HCT116 (cell line): ENCODE measurements at regions of chr1 and their contacts with region 1.

Region 1: GRCh38 chr1:202315576-202316168 is 26.1 kb downstream of the UBE2T start:
- DNase-seq: peak; percentile 59
- ATAC-seq: peak; percentile 97
- H3K4me3 ChIP-seq: no peak overlapping the region
- H3K27ac ChIP-seq: no peak overlapping the region
- H3K4me1 ChIP-seq: no peaks in the 10 kb centered on the region
- H3K27me3 ChIP-seq: peaks cover 15% of the 10 kb centered on the region; the same call in 1 of the 2 replicates
- CTCF ChIP-seq: peak; percentile 98
- POLR2A ChIP-seq: no peak
- RAD21 ChIP-seq: peak; percentile 99

Region 2: GRCh38 chr1:201019321-201019977 is 1296.2 kb before region 1 on chr1:
- CTCF ChIA-PET with region 1: no interaction called
- POLR2A ChIA-PET with region 1: no interaction called
- RAD21 ChIA-PET with region 1: no interaction called
- intact Hi-C with region 1: no loop called
- DNase-seq: peak; percentile 49
- ATAC-seq: no peak
- H3K4me3 ChIP-seq: no peak overlapping the region
- H3K27ac ChIP-seq: no peak overlapping the region
- H3K4me1 ChIP-seq: peaks cover 13 to 42% of the 10 kb centered on the region in 2 experiments; a peak in 3 of 4 replicates
- H3K27me3 ChIP-seq: no peaks in the 10 kb centered on the region
- CTCF ChIP-seq: no peak
- POLR2A ChIP-seq: no peak
- RAD21 ChIP-seq: no peak

Region 3: DNA sequence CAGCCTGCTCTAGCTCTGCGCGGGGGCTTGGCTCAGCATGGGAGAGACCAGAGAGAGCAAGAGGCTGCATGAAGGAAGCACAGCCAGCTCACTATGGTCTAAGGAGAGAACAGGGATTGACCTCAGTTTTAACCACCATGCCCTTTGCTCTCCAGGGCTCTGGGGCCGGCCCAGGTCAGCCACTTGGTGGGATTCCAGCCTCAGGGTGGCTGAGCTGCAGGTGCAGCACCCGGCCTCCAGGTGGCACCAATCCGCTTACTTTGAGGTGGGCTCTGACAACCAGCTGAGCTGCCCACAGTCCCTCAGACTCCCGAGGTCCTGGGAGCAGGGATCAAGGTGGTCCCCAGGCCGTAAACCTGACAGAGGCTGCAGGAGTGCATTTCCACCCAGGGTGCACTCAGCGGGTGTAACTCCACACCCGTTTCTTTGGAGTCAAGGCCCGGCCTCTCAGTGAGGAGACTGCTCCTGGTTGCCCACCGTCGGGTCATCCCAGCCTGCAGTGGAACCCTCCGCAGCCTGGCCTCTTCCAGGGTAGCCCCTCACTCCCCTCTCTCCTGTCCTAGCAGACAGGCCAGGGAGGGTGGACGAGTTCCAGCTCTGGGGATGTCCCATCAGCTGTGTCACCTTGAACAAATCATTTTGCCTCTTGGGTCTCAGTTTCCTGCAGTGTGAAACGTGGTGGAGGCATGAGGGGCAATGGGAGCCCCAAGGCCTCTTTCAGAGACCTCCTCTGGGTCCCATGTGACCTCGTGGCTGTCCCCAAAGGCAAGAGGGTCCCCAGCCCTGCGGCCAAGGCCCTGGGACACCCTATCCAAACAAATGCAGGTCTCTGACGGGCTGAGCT is 122.7 kb before region 1 on chr1:
- CTCF ChIA-PET with region 1: interaction called, 36 read pairs
- POLR2A ChIA-PET with region 1: no interaction called
- RAD21 ChIA-PET with region 1: interaction called in 1 of 2 experiments, 6 read pairs
- intact Hi-C with region 1: loop called (anchors 1 kb)
- DNase-seq: no peak
- ATAC-seq: peak; percentile 67
- H3K4me3 ChIP-seq: no peak overlapping the region
- H3K27ac ChIP-seq: no peak overlapping the region
- H3K4me1 ChIP-seq: no peaks in the 10 kb centered on the region
- H3K27me3 ChIP-seq: no peaks in the 10 kb centered on the region; the same call in 1 of the 2 replicates
- CTCF ChIP-seq: peak; percentile 83 to 96 (median 90)
- POLR2A ChIP-seq: no peak
- RAD21 ChIP-seq: peak; percentile 88

Region 4: DNA sequence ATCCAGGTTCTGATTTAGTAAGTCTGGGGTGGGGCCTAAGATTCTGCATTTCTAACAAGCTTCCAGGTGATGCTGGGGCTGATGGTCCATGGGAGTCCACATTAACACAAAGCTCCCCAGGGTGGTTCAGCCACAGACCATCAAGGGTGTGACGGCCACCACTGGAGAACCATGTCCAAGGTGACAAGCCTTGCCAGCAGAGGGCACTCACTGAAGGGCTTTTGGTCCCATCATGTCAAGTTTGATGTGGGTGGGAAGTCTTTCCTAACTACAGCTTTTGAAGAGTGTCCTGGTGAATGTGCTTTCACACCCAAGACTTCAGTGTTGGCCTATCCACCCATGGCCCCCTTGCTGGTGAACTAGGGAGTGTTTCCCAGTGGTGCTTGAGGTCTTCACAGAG is 41.1 kb before region 1 on chr1:
- CTCF ChIA-PET with region 1: interaction called, 7 read pairs
- POLR2A ChIA-PET with region 1: no interaction called
- RAD21 ChIA-PET with region 1: no interaction called
- intact Hi-C with region 1: loop called (anchors 1 kb)
- DNase-seq: peak; percentile 22
- ATAC-seq: peak; percentile 91
- H3K4me3 ChIP-seq: no peak overlapping the region
- H3K27ac ChIP-seq: no peak overlapping the region
- H3K4me1 ChIP-seq: no peaks in the 10 kb centered on the region
- H3K27me3 ChIP-seq: peaks cover 25% of the 10 kb centered on the region
- CTCF ChIP-seq: peak; percentile 51 to 73 (median 69); a peak in 5 of 6 replicates
- POLR2A ChIP-seq: no peak
- RAD21 ChIP-seq: peak; percentile 68